AG04449 (cell line): ENCODE measurements at regions of chr6 and their contacts with region 1.

Region 1: GRCh38 chr6:34610819-34611477 is 54.8 kb upstream of the SPDEF start:
- DNase-seq: peak; percentile 63
- H3K4me3 ChIP-seq: no peak overlapping the region
- CTCF ChIP-seq: no peak

Region 2: GRCh38 chr6:34161857-34162515 is 449.0 kb before region 1 on chr6:
- CTCF ChIA-PET with region 1: interaction called, 81 read pairs
- POLR2A ChIA-PET with region 1: interaction called, 3 read pairs
- DNase-seq: no peak
- H3K4me3 ChIP-seq: no peak overlapping the region
- CTCF ChIP-seq: no peak

Region 3: DNA sequence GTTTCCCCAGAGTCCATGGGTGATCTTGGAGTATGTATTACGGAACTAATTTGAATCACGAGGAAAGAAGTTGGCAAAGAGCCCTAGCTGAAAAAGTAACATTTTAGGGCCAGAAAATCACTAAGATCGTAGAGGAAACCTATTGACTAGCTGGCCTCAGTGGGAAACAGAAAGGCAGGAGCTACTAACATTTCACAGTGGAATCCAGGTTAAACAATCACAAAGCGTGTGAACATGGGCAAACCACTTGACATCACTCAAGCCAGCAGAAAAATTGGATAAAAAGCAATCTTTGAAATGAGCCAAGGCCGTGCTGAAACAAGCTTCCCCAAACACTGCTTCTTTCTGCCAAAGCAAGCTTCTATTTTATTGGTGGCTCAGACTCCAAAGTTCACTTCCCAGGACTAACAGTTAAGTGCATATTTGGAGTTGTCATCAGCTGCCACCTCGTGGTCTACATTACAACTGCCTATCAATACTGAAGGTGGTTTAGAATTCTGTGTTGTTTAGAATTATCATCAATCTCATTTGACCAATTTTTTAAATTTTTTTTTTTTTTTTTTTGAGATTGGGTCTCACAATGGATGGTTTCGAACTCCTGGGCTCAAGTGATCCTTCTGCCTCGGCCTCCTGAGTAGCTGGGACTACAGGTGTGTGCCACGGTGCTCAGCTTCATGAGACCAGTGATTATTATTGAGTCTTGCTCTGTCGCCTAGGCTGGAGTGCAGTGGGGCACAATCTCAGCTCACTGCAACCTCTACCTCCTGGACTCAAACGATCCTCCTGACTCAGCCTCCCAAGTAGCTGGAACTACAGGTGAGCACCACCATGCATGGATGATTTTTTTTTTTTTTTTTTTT is 195.7 kb before region 1 on chr6:
- CTCF ChIA-PET with region 1: interaction called, 11 read pairs
- POLR2A ChIA-PET with region 1: no interaction called
- DNase-seq: no peak
- H3K4me3 ChIP-seq: no peak overlapping the region
- CTCF ChIP-seq: peak; percentile 33

Region 4: DNA sequence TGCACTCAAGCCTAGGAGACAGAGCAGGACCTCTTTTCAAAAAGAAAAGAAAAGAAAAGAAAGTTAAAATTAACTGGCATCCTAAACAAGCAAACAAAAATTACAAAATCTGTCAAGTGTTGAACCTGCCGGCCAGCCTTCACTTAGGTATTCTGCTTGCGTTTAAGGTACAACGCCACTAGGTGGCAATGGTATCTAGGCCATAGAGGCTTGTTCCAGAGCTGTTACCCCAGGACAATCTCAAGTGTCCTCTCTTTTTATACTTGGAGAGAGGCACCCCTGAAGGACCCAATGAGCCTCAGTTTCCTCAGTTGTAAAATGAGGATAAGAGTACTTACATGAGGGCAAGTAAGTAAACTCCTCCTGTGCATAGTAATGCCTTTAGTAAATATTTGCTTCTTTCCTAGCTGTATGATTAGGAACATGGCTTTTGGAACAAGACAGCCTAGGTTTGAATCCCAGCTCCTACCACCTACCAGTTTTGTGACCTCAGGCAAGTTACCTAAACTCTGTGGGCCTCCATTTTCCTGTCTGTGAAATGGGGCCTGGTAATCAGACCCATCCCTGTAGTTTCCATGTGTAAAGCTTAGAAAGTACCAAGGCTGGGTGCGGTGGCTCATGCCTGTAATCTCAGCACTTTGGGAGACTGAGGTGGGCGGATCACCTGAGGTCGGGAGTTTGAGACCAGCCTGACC is 150.9 kb before region 1 on chr6:
- CTCF ChIA-PET with region 1: interaction called, 85 read pairs
- POLR2A ChIA-PET with region 1: no interaction called
- DNase-seq: no peak
- H3K4me3 ChIP-seq: no peak overlapping the region
- CTCF ChIP-seq: peak; percentile 45

Region 5: DNA sequence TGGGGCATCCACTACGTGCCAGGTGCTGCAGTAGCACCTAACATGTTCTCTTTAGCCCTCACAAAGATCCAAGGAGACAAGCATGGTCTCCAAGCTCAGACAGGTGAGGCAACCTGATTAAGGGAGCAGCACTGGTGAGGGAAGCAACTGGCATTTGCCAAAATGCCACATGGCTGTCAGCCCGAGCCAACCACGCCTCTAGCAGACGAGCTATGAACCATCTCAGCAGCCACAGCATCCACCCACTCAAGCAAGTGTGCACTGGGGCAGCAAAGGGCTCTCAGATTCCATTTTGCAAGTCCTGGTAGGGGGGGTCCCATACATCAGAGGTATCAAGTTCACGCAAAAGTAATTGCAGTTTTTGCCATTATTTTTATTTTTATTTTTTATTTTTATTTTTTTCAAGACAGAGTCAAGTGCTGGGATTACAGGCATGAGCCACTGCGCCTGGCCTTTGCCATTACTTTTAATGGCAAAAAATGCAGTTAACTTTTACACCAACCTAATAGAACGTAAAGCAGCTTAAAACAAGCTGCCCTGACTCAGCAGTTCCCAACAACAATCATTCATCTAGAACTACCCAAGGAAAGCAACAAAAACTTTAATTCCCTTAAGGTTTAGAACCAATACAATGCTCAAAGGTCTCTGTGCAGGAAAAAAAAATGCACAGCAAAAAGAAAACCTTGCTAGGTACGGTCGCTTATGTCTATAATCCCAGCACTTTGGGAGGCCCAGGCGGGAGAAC is 18.6 kb before region 1 on chr6:
- CTCF ChIA-PET with region 1: interaction called, 11 read pairs
- POLR2A ChIA-PET with region 1: no interaction called
- DNase-seq: no peak
- H3K4me3 ChIP-seq: no peak overlapping the region
- CTCF ChIP-seq: no peak